ENCODE measurements at regions of chr9 and their contacts with region 1.

Region 1: GRCh38 chr9:5617749-5618148 is 11.2 kb upstream of the RIC1 start:
- DNase-seq: no peak
- H3K4me3 ChIP-seq: no peak overlapping the region
- H3K27ac ChIP-seq: no peak overlapping the region
- H3K27me3 ChIP-seq: no peaks in the 10 kb centered on the region
- CTCF ChIP-seq: no peak

Region 2: GRCh38 chr9:5479994-5480694 is 137.6 kb before region 1 on chr9:
- CTCF ChIA-PET with region 1: no interaction called
- POLR2A ChIA-PET with region 1: no interaction called
- DNase-seq: no peak
- H3K4me3 ChIP-seq: no peak overlapping the region
- H3K27ac ChIP-seq: no peak overlapping the region
- H3K27me3 ChIP-seq: no peaks in the 10 kb centered on the region
- CTCF ChIP-seq: no peak

Region 3: GRCh38 chr9:5708414-5708813 is 90.7 kb after region 1 on chr9:
- CTCF ChIA-PET with region 1: interaction called, 10 read pairs
- POLR2A ChIA-PET with region 1: no interaction called
- DNase-seq: no peak
- H3K4me3 ChIP-seq: no peak overlapping the region
- H3K27ac ChIP-seq: no peak overlapping the region
- H3K27me3 ChIP-seq: no peaks in the 10 kb centered on the region
- CTCF ChIP-seq: no peak

Region 4: GRCh38 chr9:5773324-5773999 is 155.7 kb after region 1 on chr9:
- CTCF ChIA-PET with region 1: no interaction called
- POLR2A ChIA-PET with region 1: no interaction called
- DNase-seq: no peak
- H3K4me3 ChIP-seq: no peak overlapping the region
- H3K27ac ChIP-seq: no peak overlapping the region
- H3K27me3 ChIP-seq: no peaks in the 10 kb centered on the region
- CTCF ChIP-seq: 0 out of 2 replicates have a peak, but pooled peaks have one; percentile 17